ENCODE measurements at regions of chr16 and their contacts with region 1.

Region 1: DNA sequence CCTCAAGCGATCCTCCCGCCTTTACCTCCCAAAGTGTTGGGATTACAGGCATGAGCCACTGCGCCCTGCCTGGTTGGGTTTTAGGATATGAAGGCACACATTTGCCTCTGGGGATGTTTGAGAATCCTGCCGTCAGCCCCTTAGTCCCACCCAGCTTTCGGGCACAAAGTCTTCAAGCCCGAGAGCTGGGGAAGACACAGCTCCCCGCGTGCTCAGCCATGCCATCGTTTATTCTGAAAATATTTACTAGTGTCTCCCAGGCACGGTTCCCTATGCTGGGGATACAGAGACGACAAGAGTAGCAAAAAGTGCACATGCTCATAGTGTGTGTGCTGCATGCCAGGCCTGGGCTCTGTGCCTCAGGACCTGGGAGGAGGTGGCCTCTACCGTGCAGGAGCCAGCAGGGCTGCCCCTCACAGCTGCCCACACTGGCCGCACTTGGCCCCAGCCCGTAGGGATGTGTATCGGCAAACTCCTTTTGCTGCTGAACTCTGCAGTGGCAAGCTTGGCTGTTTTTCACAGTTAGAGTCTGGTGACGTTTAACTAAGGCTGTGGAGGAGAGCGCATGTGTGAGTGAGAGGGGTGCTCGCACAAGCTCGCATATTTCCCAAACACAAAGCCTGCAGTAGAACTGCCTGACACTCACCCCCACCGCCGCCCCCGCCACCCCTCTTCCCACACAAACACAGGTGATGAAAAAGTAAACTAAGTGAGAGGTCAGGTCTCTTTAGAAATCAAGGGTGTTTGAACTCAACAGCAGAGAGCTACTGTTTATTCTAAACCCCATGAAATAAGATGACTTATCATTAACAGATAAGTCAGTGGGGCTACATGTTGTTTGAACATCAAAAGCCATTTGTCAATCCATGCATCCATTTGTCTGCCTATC is 266.4 kb downstream of the MRTFB start:
- DNase-seq: no peak
- ATAC-seq: peak in 7 of 8 donors; percentile 34 to 73 (median 54)
- H3K4me3 ChIP-seq: no peak overlapping the region
- H3K27ac ChIP-seq: no peak overlapping the region
- H3K4me1 ChIP-seq: peaks cover 0 to 6% (median 0%) of the 10 kb centered on the region in 9 donors
- H3K27me3 ChIP-seq: no peaks in the 10 kb centered on the region
- CTCF ChIP-seq: no peak

Region 2: GRCh38 chr16:14399378-14400284 is 62.1 kb after region 1 on chr16:
- intact Hi-C with region 1: loop called in 1 of 10 experiments (anchors 10 kb)
- DNase-seq: peak; percentile 25 to 29
- ATAC-seq: peak; percentile 89 to 96 (median 94)
- H3K4me3 ChIP-seq: no peak overlapping the region
- H3K27ac ChIP-seq: peak overlapping the region; percentile 1 to 84 (median 72)
- H3K4me1 ChIP-seq: peaks cover 4 to 19% (median 14%) of the 10 kb centered on the region in 9 donors
- H3K27me3 ChIP-seq: no peaks in the 10 kb centered on the region
- CTCF ChIP-seq: no peak

Region 3: DNA sequence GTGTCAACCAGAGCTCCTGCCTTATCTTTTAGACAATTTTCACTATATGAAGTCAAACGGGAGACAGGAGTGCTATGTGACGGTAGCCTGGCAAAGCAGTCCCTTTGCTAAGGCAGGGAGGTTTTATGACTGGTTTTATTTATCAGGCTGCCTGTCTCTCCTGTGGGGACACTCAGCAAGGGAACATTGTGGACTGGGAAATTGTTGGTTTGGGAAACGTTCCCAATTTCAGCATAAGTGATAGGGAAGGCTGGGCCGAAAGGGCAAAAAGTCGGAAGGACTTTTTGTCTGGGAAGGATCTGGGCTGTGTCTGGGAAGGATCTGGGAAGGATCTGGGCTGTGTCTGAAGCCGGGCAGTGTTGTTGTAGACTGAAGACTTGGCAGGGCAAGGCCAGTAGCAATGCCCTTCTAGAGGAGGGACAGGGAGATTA is 81.3 kb after region 1 on chr16:
- intact Hi-C with region 1: loop called in 1 of 10 experiments (anchors 10 kb)
- DNase-seq: no peak
- ATAC-seq: peak in 7 of 8 donors; percentile 64 to 95 (median 72)
- H3K4me3 ChIP-seq: peak overlapping the region in 1 of 10 donors; percentile 5
- H3K27ac ChIP-seq: peak overlapping the region; percentile 42 to 83 (median 69)
- H3K4me1 ChIP-seq: peaks cover 0 to 26% (median 11%) of the 10 kb centered on the region in 9 donors
- H3K27me3 ChIP-seq: no peaks in the 10 kb centered on the region
- CTCF ChIP-seq: no peak

Measured in heart right ventricle (tissue), 16 donors.